Activated CD4-positive, alpha-beta memory T cell treated with anti-CD3 and anti-CD28 coated beads for 36 hours (primary cell): ENCODE measurements at regions of chr6 and their contacts with region 1.

Region 1: GRCh38 chr6:134174672-134175198 is 122.3 kb upstream of the SLC2A12 start:
- DNase-seq: peak; percentile 94
- H3K4me3 Mint-ChIP-seq: peak overlapping the region; percentile 98
- H3K27ac Mint-ChIP-seq: peak overlapping the region; percentile 94
- H3K4me1 Mint-ChIP-seq: peaks cover 62% of the 10 kb centered on the region
- H3K27me3 Mint-ChIP-seq: no peaks in the 10 kb centered on the region

Region 2: DNA sequence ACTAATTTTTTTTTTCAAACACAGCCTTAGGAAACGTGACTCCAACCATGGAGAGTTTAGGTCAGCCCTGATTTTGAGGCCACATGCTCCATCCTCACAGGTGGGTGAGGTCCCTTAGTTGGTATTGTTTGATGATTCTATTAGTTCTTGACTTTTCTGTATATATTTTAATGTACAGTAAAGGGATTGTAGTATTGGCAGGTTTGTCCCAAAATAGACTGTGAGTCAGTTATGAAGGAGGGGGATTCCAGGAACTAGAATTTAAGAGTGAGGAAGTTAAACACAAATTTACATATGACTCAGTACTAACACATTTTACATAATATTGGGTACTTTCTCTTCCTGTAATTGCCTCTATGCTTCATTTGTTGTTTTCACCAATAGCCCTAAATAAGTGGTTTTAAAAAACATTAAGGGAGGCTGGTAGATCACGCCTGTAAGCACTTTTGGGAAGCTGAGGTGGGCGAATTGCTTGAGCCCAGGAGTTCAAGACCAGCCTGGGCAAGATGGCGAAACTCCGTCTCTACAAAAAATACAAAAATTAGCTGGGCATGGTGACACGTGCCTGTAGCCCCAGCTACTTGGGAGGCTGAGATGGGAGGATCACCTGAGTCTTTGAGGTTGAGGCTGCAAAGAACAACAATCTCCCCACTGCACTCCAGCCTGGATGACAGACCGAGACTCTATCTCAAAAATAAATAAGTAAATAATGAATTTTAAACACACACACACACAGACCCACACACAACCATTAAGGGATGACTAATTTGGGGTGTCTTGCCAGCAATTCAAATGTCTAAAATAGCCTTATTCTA is 61.4 kb after region 1 on chr6:
- CTCF ChIA-PET with region 1: no interaction called
- POLR2A ChIA-PET with region 1: interaction called, 3 read pairs
- intact Hi-C with region 1: loop called (anchors 1 kb)
- DNase-seq: peak; percentile 22
- H3K4me3 Mint-ChIP-seq: peak overlapping the region; percentile 29
- H3K27ac Mint-ChIP-seq: peak overlapping the region; percentile 85
- H3K4me1 Mint-ChIP-seq: peaks cover 41% of the 10 kb centered on the region
- H3K27me3 Mint-ChIP-seq: no peaks in the 10 kb centered on the region

Region 3: GRCh38 chr6:134317471-134318131 is 142.9 kb after region 1 on chr6 and contains the start of gene SGK1:
- CTCF ChIA-PET with region 1: interaction called, 5 read pairs
- POLR2A ChIA-PET with region 1: no interaction called
- intact Hi-C with region 1: loop called (anchors 2 kb)
- DNase-seq: peak; percentile 32
- H3K4me3 Mint-ChIP-seq: peak within 1 kb of the TSS; percentile 73
- H3K27ac Mint-ChIP-seq: no peak within 1 kb of the TSS
- H3K4me1 Mint-ChIP-seq: peaks cover 15% of the 10 kb centered on the region
- H3K27me3 Mint-ChIP-seq: peaks cover 13% of the 10 kb centered on the region
- total RNA-seq, gene SGK1: 39.7 to 41.0 TPM

Region 4: GRCh38 chr6:134436281-134436815 is 261.6 kb after region 1 on chr6:
- CTCF ChIA-PET with region 1: interaction called, 8 read pairs
- POLR2A ChIA-PET with region 1: interaction called, 6 read pairs
- intact Hi-C with region 1: loop called (anchors 1 kb)
- DNase-seq: peak; percentile 89
- H3K4me3 Mint-ChIP-seq: peak overlapping the region; percentile 58
- H3K27ac Mint-ChIP-seq: peak overlapping the region; percentile 87
- H3K4me1 Mint-ChIP-seq: peaks cover 38% of the 10 kb centered on the region
- H3K27me3 Mint-ChIP-seq: no peaks in the 10 kb centered on the region

Region 5: GRCh38 chr6:134822920-134823709 is 648.4 kb after region 1 on chr6:
- CTCF ChIA-PET with region 1: interaction called, 25 read pairs
- POLR2A ChIA-PET with region 1: no interaction called
- intact Hi-C with region 1: loop called (anchors 1 kb)
- DNase-seq: peak; percentile 29
- H3K4me3 Mint-ChIP-seq: no peak overlapping the region
- H3K27ac Mint-ChIP-seq: no peak overlapping the region
- H3K4me1 Mint-ChIP-seq: no peaks in the 10 kb centered on the region
- H3K27me3 Mint-ChIP-seq: peaks cover 3% of the 10 kb centered on the region

Region 6: DNA sequence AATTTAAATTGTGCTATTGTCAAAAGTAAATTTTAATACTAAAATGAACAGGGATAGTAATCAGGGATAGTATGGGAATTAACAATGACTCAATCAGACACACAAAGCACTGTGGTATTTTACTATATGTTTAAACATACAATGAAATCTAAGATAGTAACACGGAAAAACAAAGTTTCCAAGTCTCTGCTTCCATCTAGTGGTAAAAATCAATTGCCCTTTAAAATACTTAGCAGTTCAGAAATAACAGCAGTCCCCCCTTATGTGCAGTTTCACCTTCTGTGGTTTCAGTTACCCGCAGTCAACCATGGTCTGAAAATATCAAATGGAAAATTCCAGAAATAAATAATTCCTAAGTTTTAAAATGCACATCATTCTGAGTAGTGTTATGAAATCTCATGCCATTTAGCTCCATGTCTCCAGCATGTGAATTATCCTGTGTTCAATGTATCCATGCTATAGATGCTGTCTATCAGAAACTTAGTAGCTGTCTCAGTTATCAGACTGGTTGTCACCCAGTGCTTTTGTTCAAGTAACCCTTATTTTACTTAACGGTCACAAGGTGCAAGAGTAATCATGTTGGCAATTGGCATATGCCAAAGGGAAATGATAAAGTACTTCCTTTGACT is 1264.3 kb after region 1 on chr6:
- CTCF ChIA-PET with region 1: no interaction called
- POLR2A ChIA-PET with region 1: no interaction called
- intact Hi-C with region 1: loop called (anchors 5 kb)
- DNase-seq: no peak
- H3K4me3 Mint-ChIP-seq: no peak overlapping the region
- H3K27ac Mint-ChIP-seq: no peak overlapping the region
- H3K4me1 Mint-ChIP-seq: peaks cover 10% of the 10 kb centered on the region
- H3K27me3 Mint-ChIP-seq: no peaks in the 10 kb centered on the region